ENCODE measurements at regions of chr15 and their contacts with region 1.

Region 1: DNA sequence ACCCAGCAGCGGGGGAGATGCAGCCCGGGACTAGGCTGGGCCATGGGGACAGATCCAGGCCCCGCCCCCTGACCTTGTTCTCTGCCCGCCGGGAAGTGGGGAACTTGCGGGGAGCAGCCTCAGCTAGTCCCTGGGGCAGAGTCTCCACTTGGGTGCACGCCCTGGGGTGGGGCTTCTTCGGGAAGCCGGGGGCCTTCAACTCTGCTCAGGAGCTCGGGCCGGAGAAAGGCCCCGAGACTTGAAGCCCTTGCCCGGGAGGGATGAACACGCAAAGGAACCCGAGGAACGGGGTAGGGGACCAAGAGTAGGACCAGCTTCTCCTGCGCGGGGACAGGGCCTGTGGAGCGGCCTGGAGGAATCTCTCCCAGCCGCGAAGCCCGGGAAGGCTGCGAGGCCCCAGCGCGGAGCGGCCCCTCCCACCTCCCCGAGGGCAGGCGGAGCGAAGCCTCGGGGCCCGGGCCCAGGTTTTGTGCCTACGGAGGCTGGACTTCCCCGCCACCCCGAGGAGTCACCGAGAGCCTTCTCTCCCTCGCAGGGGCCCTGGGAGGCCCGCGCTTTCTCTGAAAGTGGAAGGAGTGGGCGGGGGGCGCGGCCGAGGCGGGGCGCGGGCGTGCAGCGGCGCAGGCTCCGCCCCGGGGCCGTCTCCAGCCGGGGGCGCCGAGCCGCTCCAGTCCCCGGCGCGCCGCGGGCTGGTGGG is at the start of gene ITPKA:
- DNase-seq: peak; percentile 95
- H3K4me3 Mint-ChIP-seq: peak within 1 kb of the TSS; percentile 75
- H3K27ac Mint-ChIP-seq: peak within 1 kb of the TSS; percentile 84
- H3K4me1 Mint-ChIP-seq: peaks cover 36% of the 10 kb centered on the region
- H3K27me3 Mint-ChIP-seq: peaks cover 30% of the 10 kb centered on the region
- total RNA-seq, gene ITPKA: 3.3 and 3.8 TPM in 2 replicates

Region 2: DNA sequence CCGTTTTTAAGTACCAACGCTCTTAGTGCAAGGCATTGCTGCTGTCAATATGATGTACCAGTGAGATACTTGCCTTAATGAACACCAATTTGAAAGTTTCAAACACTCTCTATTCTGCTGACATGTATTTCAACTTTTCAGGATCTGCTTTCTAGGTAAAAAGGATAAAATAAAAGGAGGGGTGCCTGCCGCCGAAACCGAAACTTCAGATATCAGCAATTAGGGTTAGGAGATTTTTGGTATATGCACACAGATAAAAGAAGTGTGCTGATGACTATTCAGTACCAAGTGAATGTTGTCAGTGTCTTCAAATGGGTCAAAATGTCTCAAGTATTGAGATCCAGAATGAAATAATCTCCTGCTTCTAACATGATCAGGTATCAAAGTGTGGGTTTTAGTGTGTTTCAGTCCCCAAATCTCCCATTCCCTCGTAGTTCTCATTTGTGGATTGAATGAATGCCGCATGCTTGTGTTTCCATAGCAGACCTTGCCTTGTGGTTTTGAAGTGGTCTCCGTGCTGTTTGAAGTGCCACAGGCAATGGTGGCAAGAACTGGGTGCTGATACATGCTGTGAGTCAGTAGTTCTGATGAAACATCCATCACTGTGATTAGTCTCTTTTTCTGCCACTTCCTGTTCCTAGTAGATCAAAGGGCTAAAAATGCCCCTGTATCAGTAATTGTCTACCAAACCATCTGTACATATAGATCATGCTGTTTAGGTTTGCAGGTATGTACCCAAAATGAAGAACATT is 1000.1 kb before region 1 on chr15:
- intact Hi-C with region 1: loop called (anchors 5 kb)
- DNase-seq: peak; percentile 75
- H3K4me3 Mint-ChIP-seq: peak overlapping the region; percentile 32
- H3K27ac Mint-ChIP-seq: peak overlapping the region; percentile 36
- H3K4me1 Mint-ChIP-seq: peaks cover 22% of the 10 kb centered on the region
- H3K27me3 Mint-ChIP-seq: peaks cover 7% of the 10 kb centered on the region

Region 3: GRCh38 chr15:41423979-41424659 is 69.2 kb before region 1 on chr15:
- intact Hi-C with region 1: loop called (anchors 5 kb)
- DNase-seq: peak; percentile 71
- H3K4me3 Mint-ChIP-seq: peak overlapping the region; percentile 59
- H3K27ac Mint-ChIP-seq: peak overlapping the region; percentile 85
- H3K4me1 Mint-ChIP-seq: peaks cover 29% of the 10 kb centered on the region
- H3K27me3 Mint-ChIP-seq: no peaks in the 10 kb centered on the region

Region 4: DNA sequence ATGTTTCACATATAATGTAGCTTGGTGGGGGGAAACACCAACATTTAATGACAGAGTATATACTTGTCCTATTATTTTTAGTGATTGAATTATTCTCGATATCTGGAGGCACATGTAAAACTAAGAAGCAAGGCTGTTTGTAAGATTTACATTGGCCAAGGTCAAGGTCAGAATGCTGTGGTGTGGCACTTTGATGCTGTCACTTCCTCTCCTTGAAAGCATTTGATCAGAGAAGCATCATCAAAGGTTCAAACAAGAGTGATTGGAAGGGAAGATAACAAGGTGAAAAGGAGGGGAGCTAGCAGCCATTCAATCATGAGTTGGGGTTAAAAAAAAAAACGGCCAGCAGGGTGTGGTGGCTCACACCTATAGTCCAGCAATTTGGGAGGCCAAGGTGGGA is 50.1 kb before region 1 on chr15:
- intact Hi-C with region 1: no loop called
- DNase-seq: peak; percentile 62
- H3K4me3 Mint-ChIP-seq: no peak overlapping the region
- H3K27ac Mint-ChIP-seq: peak overlapping the region; percentile 75
- H3K4me1 Mint-ChIP-seq: peaks cover 13% of the 10 kb centered on the region
- H3K27me3 Mint-ChIP-seq: no peaks in the 10 kb centered on the region

Region 5: GRCh38 chr15:41827880-41828806 is 334.8 kb after region 1 on chr15 and contains the start of gene JMJD7:
- intact Hi-C with region 1: loop called (anchors 5 kb)
- DNase-seq: peak; percentile 98
- H3K4me3 Mint-ChIP-seq: peak within 1 kb of the TSS; percentile 86
- H3K27ac Mint-ChIP-seq: peak within 1 kb of the TSS; percentile 87
- H3K4me1 Mint-ChIP-seq: peaks cover 38% of the 10 kb centered on the region
- H3K27me3 Mint-ChIP-seq: peaks cover 2% of the 10 kb centered on the region
- total RNA-seq, gene JMJD7: 18.3 and 20.1 TPM in 2 replicates

Region 6: GRCh38 chr15:41972253-41973242 is 479.2 kb after region 1 on chr15 and contains the start of gene EHD4:
- intact Hi-C with region 1: loop called (anchors 5 kb)
- DNase-seq: peak; percentile 99
- H3K4me3 Mint-ChIP-seq: peak within 1 kb of the TSS; percentile 94
- H3K27ac Mint-ChIP-seq: peak within 1 kb of the TSS; percentile 95
- H3K4me1 Mint-ChIP-seq: peaks cover 47% of the 10 kb centered on the region
- H3K27me3 Mint-ChIP-seq: peaks cover 22% of the 10 kb centered on the region
- total RNA-seq, gene EHD4: 28.4 and 28.9 TPM in 2 replicates